CD4-positive, alpha-beta T cell (primary cell): ENCODE measurements at regions of chr2 and their contacts with region 1.

Region 1: DNA sequence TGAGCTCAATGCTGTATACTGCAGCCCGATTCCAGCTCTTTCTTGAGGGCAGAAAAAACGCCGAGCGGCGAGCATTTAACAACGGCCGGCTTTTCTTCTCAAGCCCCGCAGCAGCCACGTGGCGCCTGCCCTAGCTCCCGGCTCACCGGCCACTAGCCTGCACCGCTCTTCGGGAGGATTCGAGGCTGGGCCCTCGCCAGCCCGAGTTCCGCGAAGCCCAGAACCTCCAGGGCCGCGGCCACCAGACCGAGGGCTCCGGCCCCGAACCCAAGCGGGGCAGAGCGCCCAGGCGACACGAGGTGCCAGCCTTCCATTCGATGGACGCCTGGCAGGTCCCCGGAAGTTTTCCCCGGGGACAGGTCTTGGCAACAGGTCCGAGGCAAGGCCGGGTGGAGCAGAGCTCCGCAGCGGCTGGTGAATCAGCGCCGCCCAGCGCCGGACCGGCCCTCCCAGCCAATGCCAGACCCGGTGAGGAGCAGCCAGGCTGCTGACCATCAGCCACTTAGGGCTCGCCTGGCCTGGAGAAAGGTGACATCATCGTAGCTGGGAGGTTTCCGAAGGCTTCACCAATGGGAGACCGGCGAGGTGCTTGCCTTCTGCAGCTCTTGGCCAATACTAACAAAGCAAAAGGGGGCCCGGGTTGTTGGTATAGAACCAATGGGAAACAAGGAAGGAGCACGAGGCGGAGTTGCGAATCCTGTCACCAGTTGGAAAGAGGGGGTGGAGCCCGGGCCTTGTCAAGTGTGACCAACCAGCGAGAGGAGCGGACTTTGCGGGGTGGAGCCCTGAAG is 544 bp upstream of the MXD1 start:
- DNase-seq: peak in 9 of 14 experiments; percentile 13 to 100 (median 100)
- ATAC-seq: peak; percentile 92
- H3K4me3 ChIP-seq: peak overlapping the region; percentile 86
- H3K4me3 Mint-ChIP-seq: peak overlapping the region; percentile 89
- H3K27ac ChIP-seq: peak overlapping the region; percentile 94
- H3K27ac Mint-ChIP-seq: peak overlapping the region; percentile 75
- H3K4me1 ChIP-seq: peaks cover 15% of the 10 kb centered on the region
- H3K4me1 Mint-ChIP-seq: peaks cover 33% of the 10 kb centered on the region
- H3K27me3 ChIP-seq: no peaks in the 10 kb centered on the region
- H3K27me3 Mint-ChIP-seq: no peaks in the 10 kb centered on the region
- CTCF ChIP-seq: no peak

Region 2: DNA sequence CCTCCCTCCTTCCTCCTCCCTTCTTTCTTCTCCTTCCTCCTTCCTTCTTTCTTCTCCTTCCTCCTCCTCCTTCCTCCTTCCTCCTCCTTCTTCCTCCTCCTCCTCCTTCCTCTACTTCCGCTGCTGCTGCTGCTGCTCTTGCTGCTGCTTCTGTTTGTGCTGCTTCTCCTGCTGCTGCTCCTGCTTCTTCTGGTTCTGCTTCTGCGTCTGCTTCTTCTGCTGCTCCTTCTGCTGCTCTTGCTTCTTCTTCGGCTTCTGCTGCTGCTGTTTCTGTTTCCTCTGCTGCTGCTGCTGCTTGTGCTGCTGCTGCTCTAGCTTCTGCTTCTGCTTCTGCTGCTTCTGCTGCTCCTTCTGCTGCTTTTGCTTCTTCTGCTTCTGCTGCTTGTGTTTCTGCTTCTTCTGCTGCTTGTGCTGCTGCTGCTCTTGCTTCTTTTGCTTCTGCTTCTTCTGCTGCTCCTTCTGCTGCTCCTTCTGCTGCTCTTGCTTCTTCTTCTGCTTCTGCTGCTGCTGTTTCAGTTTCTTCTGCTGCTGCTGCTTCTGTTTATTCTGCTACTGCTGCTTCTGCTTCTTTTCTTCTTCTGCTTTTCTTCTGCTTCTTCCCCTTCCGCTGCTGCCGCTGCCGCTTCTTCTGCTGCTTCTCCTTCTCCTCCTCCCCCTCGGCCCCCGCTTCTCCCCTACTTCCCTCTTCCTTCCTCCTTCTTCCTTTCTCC is 12.0 kb before region 1 on chr2:
- CTCF ChIA-PET with region 1: interaction called, 6 read pairs
- POLR2A ChIA-PET with region 1: interaction called, 20 read pairs
- intact Hi-C with region 1: no loop called
- DNase-seq: peak in 6 of 14 experiments; percentile 2 to 53 (median 30)
- ATAC-seq: peak; percentile 58
- H3K4me3 ChIP-seq: peak overlapping the region; percentile 52
- H3K4me3 Mint-ChIP-seq: peak overlapping the region; percentile 81
- H3K27ac ChIP-seq: peak overlapping the region; percentile 11 to 52
- H3K27ac Mint-ChIP-seq: peak overlapping the region; percentile 80
- H3K4me1 ChIP-seq: peaks cover 28% of the 10 kb centered on the region
- H3K4me1 Mint-ChIP-seq: peaks cover 63% of the 10 kb centered on the region
- H3K27me3 ChIP-seq: no peaks in the 10 kb centered on the region
- H3K27me3 Mint-ChIP-seq: no peaks in the 10 kb centered on the region
- CTCF ChIP-seq: no peak

Region 3: GRCh38 chr2:70086838-70087701 is 172.7 kb after region 1 on chr2 and contains the start of gene PCBP1:
- CTCF ChIA-PET with region 1: interaction called, 8 read pairs
- POLR2A ChIA-PET with region 1: interaction called, 219 read pairs
- intact Hi-C with region 1: loop called (anchors 2 kb)
- DNase-seq: peak; percentile 95 to 99 (median 98)
- ATAC-seq: peak; percentile 55
- H3K4me3 ChIP-seq: peak within 1 kb of the TSS; percentile 66
- H3K4me3 Mint-ChIP-seq: peak within 1 kb of the TSS; percentile 92
- H3K27ac ChIP-seq: peak within 1 kb of the TSS; percentile 100
- H3K27ac Mint-ChIP-seq: peak within 1 kb of the TSS; percentile 100
- H3K4me1 ChIP-seq: peaks cover 74% of the 10 kb centered on the region
- H3K4me1 Mint-ChIP-seq: peaks cover 76% of the 10 kb centered on the region
- H3K27me3 ChIP-seq: no peaks in the 10 kb centered on the region
- H3K27me3 Mint-ChIP-seq: peaks cover 4% of the 10 kb centered on the region
- CTCF ChIP-seq: no peak
- total RNA-seq, gene PCBP1: 228 to 233 TPM

Region 4: GRCh38 chr2:70132244-70133126 is 218.1 kb after region 1 on chr2:
- CTCF ChIA-PET with region 1: interaction called, 6 read pairs
- POLR2A ChIA-PET with region 1: interaction called, 65 read pairs
- intact Hi-C with region 1: no loop called
- DNase-seq: peak in 8 of 14 experiments; percentile 34 to 80 (median 60)
- ATAC-seq: peak; percentile 62
- H3K4me3 ChIP-seq: peak overlapping the region; percentile 54
- H3K4me3 Mint-ChIP-seq: peak overlapping the region; percentile 83
- H3K27ac ChIP-seq: peak overlapping the region; percentile 76 to 84
- H3K27ac Mint-ChIP-seq: peak overlapping the region; percentile 96
- H3K4me1 ChIP-seq: peaks cover 88% of the 10 kb centered on the region
- H3K4me1 Mint-ChIP-seq: peaks cover 72% of the 10 kb centered on the region
- H3K27me3 ChIP-seq: no peaks in the 10 kb centered on the region
- H3K27me3 Mint-ChIP-seq: no peaks in the 10 kb centered on the region
- CTCF ChIP-seq: no peak

Region 5: DNA sequence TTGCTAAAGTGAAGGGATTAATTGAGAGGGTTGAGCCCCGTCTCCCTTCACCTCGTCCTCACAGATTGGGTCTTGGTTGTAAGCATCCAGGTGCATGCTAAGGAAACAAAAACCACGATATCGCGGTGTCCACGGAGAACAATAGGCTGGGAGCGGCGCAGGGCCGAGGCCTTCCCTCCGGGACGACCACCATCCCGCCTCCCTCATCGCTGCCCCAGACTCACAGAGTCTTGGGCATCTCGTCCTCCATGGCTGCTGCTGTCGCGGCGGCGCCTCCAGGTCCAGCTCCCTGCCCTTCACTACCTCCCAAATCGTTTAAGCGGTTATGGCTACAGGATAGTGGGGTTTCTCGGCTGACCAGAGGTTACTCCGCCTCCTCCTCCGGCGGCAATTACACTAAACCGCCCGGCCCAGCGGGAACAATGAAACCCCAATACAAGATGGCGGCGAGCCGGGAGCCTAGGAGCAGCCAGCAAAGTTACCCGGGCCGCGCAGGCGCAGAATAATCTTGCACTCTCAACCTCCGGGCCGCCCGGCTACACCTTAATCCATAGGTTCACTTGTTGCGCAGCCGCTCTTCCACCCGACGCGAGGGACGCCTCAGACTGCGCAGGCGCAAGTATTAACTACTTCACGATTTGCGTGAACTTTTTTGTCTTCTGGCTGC is 333.9 kb after region 1 on chr2 and contains the start of gene TIA1:
- CTCF ChIA-PET with region 1: no interaction called
- POLR2A ChIA-PET with region 1: interaction called, 10 read pairs
- intact Hi-C with region 1: loop called in 1 of 2 experiments (anchors 2 kb)
- DNase-seq: peak; percentile 96 to 100 (median 98)
- ATAC-seq: peak; percentile 96
- H3K4me3 ChIP-seq: peak within 1 kb of the TSS; percentile 85
- H3K4me3 Mint-ChIP-seq: peak within 1 kb of the TSS; percentile 97
- H3K27ac ChIP-seq: peak within 1 kb of the TSS; percentile 85 to 97
- H3K27ac Mint-ChIP-seq: peak within 1 kb of the TSS; percentile 96
- H3K4me1 ChIP-seq: peaks cover 31% of the 10 kb centered on the region
- H3K4me1 Mint-ChIP-seq: peaks cover 47% of the 10 kb centered on the region
- H3K27me3 ChIP-seq: no peaks in the 10 kb centered on the region
- H3K27me3 Mint-ChIP-seq: peaks cover 7% of the 10 kb centered on the region
- CTCF ChIP-seq: no peak
- total RNA-seq, gene TIA1: 34.4 to 45.3 TPM

Region 6: GRCh38 chr2:70647873-70648481 is 733.6 kb after region 1 on chr2:
- CTCF ChIA-PET with region 1: no interaction called
- POLR2A ChIA-PET with region 1: no interaction called
- intact Hi-C with region 1: loop called in 1 of 2 experiments (anchors 5 kb)
- DNase-seq: peak; percentile 63 to 85 (median 72)
- ATAC-seq: peak; percentile 91
- H3K4me3 ChIP-seq: no peak overlapping the region
- H3K4me3 Mint-ChIP-seq: no peak overlapping the region
- H3K27ac ChIP-seq: no peak overlapping the region
- H3K27ac Mint-ChIP-seq: no peak overlapping the region
- H3K4me1 ChIP-seq: no peaks in the 10 kb centered on the region
- H3K4me1 Mint-ChIP-seq: peaks cover 5% of the 10 kb centered on the region
- H3K27me3 ChIP-seq: peaks cover 0 to 2% of the 10 kb centered on the region in 2 experiments
- H3K27me3 Mint-ChIP-seq: peaks cover 4% of the 10 kb centered on the region
- CTCF ChIP-seq: peak; percentile 96